Activated CD4-positive, alpha-beta memory T cell treated with anti-CD3 and anti-CD28 coated beads for 36 hours (primary cell): ENCODE measurements at regions of chr7 and their contacts with region 1.

Region 1: DNA sequence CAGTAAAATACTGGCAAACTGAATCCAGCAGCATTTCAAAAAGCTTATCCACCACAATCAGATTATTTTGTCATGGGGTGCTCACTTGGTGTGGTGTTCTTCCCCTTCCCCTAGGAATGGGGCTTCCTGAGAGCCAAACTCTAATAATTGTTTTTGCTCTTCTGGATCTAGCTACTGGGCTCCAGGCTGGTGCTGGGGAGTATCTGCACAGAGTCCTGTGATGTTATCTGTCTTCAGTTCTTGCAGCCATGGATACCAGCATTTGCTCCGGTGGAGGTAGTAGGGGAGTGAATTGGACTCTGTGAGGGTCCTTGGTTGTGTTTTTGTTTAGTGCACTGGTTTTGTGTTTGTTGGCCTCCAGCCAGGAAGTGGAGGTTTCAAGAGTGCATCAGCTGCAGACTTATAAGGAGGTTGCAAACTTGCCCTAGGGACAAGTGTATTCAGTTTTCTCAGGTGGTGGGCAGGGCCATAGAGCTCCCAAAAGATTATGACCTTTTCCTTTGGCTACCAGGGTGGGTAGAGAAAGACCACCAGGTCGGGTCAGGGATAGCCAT is 308.5 kb upstream of the MAGI2 start:
- DNase-seq: no peak
- H3K4me3 Mint-ChIP-seq: no peak overlapping the region
- H3K27ac Mint-ChIP-seq: no peak overlapping the region
- H3K4me1 Mint-ChIP-seq: no peaks in the 10 kb centered on the region
- H3K27me3 Mint-ChIP-seq: no peaks in the 10 kb centered on the region

Region 2: DNA sequence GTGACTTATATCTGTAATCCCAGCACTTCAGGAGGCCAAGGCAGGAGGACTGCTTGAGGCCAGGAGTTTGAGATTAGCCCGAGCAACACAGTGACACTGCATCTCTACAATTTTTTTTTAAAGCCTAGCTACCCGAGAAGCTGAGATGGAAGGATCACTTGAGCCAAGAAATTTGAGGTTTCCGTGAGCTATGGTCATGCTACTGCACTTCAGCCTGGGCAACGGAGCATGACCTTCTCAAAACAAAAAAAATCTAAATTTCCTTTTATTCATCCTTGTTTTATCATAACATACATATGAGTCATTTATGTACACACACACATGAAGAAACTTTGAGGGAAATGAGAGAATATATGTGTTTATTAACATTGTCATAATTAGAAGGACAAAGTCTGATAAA is 31.0 kb before region 1 on chr7:
- CTCF ChIA-PET with region 1: no interaction called
- POLR2A ChIA-PET with region 1: no interaction called
- intact Hi-C with region 1: loop called (anchors 1 kb)
- DNase-seq: no peak
- H3K4me3 Mint-ChIP-seq: no peak overlapping the region
- H3K27ac Mint-ChIP-seq: no peak overlapping the region
- H3K4me1 Mint-ChIP-seq: no peaks in the 10 kb centered on the region
- H3K27me3 Mint-ChIP-seq: no peaks in the 10 kb centered on the region

Region 3: DNA sequence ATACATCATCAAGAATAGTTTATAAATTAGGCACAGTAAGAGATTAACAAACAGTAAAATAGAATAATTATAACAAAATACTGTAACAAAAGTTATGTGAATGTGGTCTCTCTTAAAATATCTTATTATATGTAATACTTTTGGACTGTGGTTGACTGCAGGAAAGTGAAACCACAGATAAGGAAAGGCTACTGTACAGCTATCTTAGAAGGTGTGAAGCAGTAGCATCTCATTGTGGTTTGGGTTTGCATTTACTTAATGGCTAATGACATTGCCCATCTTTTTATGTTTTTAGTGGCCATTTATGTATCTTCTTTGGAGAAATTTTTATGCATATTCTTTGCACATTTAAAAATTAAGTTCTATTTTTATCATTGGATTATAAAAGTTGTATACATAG is 12.1 kb before region 1 on chr7:
- CTCF ChIA-PET with region 1: no interaction called
- POLR2A ChIA-PET with region 1: no interaction called
- intact Hi-C with region 1: no loop called
- DNase-seq: no peak
- H3K4me3 Mint-ChIP-seq: no peak overlapping the region
- H3K27ac Mint-ChIP-seq: no peak overlapping the region
- H3K4me1 Mint-ChIP-seq: no peaks in the 10 kb centered on the region
- H3K27me3 Mint-ChIP-seq: no peaks in the 10 kb centered on the region